ENCODE measurements at regions of chr20 and their contacts with region 1.

Region 1: DNA sequence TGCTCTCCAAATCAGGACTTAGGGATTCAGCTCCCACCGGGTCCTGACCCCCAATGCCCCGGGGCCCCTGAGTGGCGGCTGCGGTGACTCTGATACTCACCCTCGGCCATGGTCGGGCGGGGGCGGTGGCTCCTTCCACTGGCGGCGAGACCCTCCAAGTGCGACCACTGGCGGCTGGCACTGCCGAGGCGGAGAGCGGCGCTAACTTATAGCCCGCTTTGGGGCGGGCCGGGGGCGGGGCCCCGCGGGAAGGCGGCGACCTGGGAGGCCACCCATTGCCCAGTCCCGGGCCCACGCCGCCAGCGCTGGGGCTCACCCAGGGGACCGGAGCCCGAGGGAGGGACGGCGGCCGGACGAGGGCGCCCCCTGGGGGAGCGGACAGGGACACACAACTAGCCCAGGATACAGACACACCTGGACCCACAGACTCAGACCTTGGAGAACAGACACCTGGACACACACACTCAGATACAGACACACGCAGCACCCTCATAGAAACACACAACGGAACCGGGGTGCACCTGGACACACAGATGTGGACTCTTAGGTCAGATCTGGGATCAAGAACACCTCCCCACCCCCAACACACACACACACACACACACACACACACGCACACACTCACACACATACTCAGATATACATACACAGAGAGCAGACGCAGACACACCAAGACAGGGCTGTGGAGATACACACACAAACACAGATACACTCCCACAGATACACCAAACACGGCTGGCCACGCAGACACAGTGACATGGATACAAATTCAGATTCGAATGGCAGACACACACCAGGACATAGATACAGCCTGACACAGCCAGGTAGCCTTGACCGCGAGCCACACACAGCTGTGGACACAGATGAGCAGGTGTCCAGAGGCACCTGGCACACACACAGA is at the start of gene TGM2:
- DNase-seq: peak; percentile 87
- H3K4me3 Mint-ChIP-seq: peak within 1 kb of the TSS; percentile 64
- H3K27ac Mint-ChIP-seq: no peak within 1 kb of the TSS
- H3K4me1 Mint-ChIP-seq: peaks cover 23% of the 10 kb centered on the region
- H3K27me3 Mint-ChIP-seq: peaks cover 11% of the 10 kb centered on the region
- total RNA-seq, gene TGM2: 0.05 TPM in 1 of 2 replicates, not detected in the other

Region 2: GRCh38 chr20:37990571-37991151 is 174.7 kb before region 1 on chr20:
- intact Hi-C with region 1: no loop called
- DNase-seq: peak; percentile 90
- H3K4me3 Mint-ChIP-seq: peak overlapping the region; percentile 53
- H3K27ac Mint-ChIP-seq: peak overlapping the region; percentile 87
- H3K4me1 Mint-ChIP-seq: peaks cover 24% of the 10 kb centered on the region
- H3K27me3 Mint-ChIP-seq: no peaks in the 10 kb centered on the region

Region 3: GRCh38 chr20:38057351-38057972 is 107.9 kb before region 1 on chr20:
- intact Hi-C with region 1: loop called (anchors 1 kb)
- DNase-seq: peak; percentile 92
- H3K4me3 Mint-ChIP-seq: peak overlapping the region; percentile 22
- H3K27ac Mint-ChIP-seq: peak overlapping the region; percentile 80
- H3K4me1 Mint-ChIP-seq: peaks cover 19% of the 10 kb centered on the region
- H3K27me3 Mint-ChIP-seq: no peaks in the 10 kb centered on the region

Region 4: GRCh38 chr20:38073307-38074071 is 91.8 kb before region 1 on chr20:
- intact Hi-C with region 1: loop called (anchors 5 kb)
- DNase-seq: peak; percentile 84
- H3K4me3 Mint-ChIP-seq: no peak overlapping the region
- H3K27ac Mint-ChIP-seq: no peak overlapping the region
- H3K4me1 Mint-ChIP-seq: peaks cover 7% of the 10 kb centered on the region
- H3K27me3 Mint-ChIP-seq: no peaks in the 10 kb centered on the region

Region 5: GRCh38 chr20:38113401-38114325 is 51.7 kb before region 1 on chr20:
- intact Hi-C with region 1: loop called (anchors 2 kb)
- DNase-seq: peak; percentile 84
- H3K4me3 Mint-ChIP-seq: no peak overlapping the region
- H3K27ac Mint-ChIP-seq: no peak overlapping the region
- H3K4me1 Mint-ChIP-seq: peaks cover 4% of the 10 kb centered on the region
- H3K27me3 Mint-ChIP-seq: peaks cover 25% of the 10 kb centered on the region